Activated naive CD4-positive, alpha-beta T cell treated with anti-CD3 and anti-CD28 coated beads for 36 hours (primary cell): ENCODE measurements at regions of chr3 and their contacts with region 1.

Region 1: DNA sequence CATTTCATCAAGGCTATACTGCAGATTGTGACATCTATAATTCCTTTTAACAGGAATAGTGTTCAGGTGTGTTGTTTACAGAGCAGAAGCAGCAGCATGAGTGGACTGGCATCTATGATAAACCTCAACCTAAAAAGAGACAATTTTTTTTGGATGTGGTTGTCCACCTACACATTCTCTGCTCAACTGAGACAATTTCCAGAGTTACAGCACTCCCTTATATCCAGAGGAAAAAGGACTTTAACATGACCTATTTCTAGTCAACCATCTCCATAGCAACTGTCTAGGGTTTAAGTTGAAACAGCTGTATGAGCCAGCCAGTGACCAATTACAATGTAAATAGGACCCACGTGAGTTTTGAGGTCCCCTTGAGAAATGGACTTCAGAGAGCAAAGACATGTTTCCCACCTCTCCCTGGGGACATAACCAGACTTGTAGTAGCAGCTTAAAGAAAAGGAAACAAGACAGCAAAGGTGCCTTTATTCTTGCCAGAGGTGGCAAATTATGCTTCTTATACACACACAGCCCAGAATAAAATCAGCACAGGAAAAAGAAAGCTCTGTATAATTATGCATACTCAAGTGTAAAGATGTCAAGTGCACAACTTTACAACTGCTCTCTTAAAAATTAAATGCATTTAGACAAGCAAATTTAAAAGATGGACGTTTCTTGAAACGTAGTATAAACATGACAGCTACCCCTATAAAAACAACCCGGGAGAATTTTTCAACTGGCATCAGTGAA is 40.3 kb downstream of the SUMF1 start:
- DNase-seq: no peak
- H3K4me3 Mint-ChIP-seq: no peak overlapping the region
- H3K27ac Mint-ChIP-seq: no peak overlapping the region
- H3K4me1 Mint-ChIP-seq: peaks cover 21% of the 10 kb centered on the region
- H3K27me3 Mint-ChIP-seq: no peaks in the 10 kb centered on the region

Region 2: DNA sequence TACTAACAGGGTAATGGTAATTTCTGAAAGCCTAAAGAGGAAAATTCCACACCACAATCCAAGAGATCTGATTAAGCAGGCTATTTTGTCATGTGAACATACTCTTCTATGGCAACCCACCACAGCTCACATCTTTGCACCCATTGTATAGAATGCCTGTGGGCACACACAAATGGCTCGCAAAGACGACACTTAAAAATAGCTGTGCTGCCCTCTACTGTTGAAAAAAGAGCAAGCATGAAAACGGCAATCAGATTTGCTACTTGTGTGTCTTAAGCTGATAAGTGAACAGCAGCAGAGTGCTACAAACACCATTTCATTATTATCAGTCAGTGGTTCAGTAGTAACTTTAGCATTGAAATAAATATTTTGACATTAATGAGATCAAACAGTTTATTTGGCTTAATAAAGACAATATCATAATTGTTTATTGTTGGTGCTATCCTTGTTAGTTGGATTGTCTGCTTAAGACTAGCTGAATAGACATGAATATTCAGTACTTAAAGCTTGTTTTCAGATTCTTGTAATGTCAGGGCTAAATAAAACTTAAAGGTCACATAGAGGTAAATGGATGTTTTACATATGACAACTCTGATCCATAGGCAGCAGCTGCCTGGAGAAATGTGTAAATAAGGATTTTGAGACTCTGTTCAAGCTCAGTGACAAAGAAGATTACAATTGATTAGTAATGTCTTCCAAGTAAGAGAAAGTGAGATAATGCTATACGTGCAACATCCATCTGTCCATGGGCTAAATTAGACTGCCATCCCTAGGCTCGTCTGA is 428.4 kb before region 1 on chr3:
- CTCF ChIA-PET with region 1: no interaction called
- intact Hi-C with region 1: no loop called
- DNase-seq: peak; percentile 50
- H3K4me3 Mint-ChIP-seq: no peak overlapping the region
- H3K27ac Mint-ChIP-seq: no peak overlapping the region
- H3K4me1 Mint-ChIP-seq: no peaks in the 10 kb centered on the region
- H3K27me3 Mint-ChIP-seq: no peaks in the 10 kb centered on the region

Region 3: GRCh38 chr3:4466741-4467521 is 40.2 kb after region 1 on chr3 and contains the start of gene SUMF1:
- CTCF ChIA-PET with region 1: no interaction called
- intact Hi-C with region 1: loop called (anchors 2 kb)
- DNase-seq: peak; percentile 80
- H3K4me3 Mint-ChIP-seq: peak within 1 kb of the TSS; percentile 82
- H3K27ac Mint-ChIP-seq: peak within 1 kb of the TSS; percentile 78
- H3K4me1 Mint-ChIP-seq: peaks cover 18% of the 10 kb centered on the region
- H3K27me3 Mint-ChIP-seq: no peaks in the 10 kb centered on the region
- total RNA-seq, gene SUMF1: 3.9 to 5.0 TPM